Activated CD8-positive, alpha-beta memory T cell treated with anti-CD3 and anti-CD28 coated beads, Interleukin-2, amount 10 ng/mL, durations not matched to agents 7 days and 5 days (primary cell): ENCODE measurements at regions of chr18 and their contacts with region 1.

Region 1: DNA sequence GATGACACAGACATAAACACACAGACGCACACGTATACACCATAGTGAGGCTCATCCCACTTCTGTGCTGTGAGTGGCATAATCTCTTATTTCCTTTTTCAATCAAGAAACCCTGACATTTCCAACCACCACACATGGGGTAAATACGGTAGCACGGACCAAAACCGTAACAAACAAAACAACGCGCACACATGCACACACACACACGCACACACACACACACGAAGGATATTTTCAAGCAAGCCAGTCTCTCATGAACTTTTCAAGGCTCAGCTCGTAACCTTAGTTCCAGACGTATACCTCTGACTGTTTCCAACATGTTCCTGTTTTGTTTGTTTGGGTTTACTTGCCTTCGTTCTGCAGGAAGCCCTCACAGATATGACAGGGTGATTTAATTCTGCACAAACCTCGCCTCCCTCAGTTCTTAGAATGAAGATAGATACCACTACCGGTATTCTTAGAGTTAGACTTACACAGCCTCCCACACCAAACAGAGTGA is 119.8 kb downstream of the BCL2 start:
- DNase-seq: peak; percentile 79
- ATAC-seq: peak; percentile 85
- H3K4me3 Mint-ChIP-seq: no peak overlapping the region
- H3K27ac Mint-ChIP-seq: no peak overlapping the region
- H3K4me1 Mint-ChIP-seq: peaks cover 41% of the 10 kb centered on the region
- H3K27me3 Mint-ChIP-seq: no peaks in the 10 kb centered on the region

Region 2: DNA sequence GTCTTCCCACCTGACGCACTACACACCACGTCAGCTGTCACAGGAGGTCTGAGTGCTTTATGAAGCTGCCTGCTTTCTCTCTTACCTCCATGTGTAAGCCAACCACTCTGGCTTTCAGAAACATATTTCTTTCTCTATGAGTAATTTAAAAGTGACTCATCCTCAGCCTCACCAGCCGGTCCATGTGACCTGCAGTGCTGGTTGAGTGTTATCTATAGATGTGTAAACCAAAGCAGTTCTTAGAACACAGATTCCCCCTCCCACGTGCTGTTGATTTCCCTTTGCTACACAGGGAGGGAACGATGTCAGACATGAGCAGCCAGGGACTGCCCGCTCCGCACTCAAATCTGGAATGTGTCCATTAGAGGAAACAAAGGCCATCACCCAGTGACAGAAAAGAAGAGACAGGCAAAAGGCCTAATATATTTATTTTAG is 38.0 kb before region 1 on chr18:
- CTCF ChIA-PET with region 1: interaction called, 23 read pairs
- DNase-seq: peak; percentile 93
- ATAC-seq: peak; percentile 88
- H3K4me3 Mint-ChIP-seq: peak overlapping the region; percentile 76
- H3K27ac Mint-ChIP-seq: peak overlapping the region; percentile 90
- H3K4me1 Mint-ChIP-seq: peaks cover 94% of the 10 kb centered on the region
- H3K27me3 Mint-ChIP-seq: no peaks in the 10 kb centered on the region

Region 3: DNA sequence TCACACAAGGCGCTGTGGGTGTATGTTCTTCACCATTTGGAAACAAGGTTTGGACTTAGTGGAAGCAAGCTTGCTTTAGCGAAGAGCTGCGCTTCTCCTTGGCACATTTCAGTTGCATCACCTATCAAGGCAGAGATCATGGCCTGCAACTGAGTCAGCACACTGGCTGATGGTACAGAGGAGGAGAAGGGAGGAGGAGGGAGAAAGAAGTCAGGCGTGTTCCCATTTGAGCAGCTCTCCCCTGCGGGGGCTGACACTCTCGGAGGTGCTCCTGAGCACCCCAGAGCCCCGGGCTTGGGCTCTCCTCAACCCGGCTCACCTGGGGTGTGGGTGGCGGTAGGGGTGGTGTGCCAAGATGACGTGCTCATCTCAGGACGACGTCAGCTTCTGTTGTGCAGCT is 271.0 kb after region 1 on chr18:
- CTCF ChIA-PET with region 1: no interaction called
- DNase-seq: no peak
- ATAC-seq: no peak
- H3K4me3 Mint-ChIP-seq: no peak overlapping the region
- H3K27ac Mint-ChIP-seq: no peak overlapping the region
- H3K4me1 Mint-ChIP-seq: no peaks in the 10 kb centered on the region
- H3K27me3 Mint-ChIP-seq: peaks cover 41% of the 10 kb centered on the region